IMR-90 (cell line): ENCODE measurements at regions of chr7 and their contacts with region 1.

Region 1: DNA sequence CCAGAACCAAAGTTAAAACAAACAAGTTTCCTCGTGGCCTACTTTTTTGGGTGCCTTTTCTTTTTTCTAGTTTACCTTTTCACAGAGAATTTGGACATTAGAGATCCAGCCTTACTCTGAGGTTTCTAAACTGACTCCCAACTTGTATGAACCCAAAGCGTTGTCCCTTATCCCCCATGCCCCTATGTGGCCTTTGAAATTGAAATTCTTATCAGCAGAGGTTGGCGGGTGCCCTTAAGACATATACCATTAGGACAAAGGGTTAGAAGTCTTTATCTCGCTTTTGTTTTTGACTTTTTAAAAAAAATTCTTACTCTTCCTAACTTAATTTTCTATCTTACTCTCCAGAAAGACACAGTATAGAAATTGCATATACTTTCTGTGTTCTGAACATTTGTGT is 76.3 kb upstream of the C7orf33 start:
- DNase-seq: no peak
- ATAC-seq: no peak
- H3K4me3 ChIP-seq: no peak overlapping the region
- H3K27ac ChIP-seq: no peak overlapping the region
- H3K4me1 ChIP-seq: no peaks in the 10 kb centered on the region
- H3K27me3 ChIP-seq: no peaks in the 10 kb centered on the region
- CTCF ChIP-seq: no peak
- POLR2A ChIP-seq: no peak
- RAD21 ChIP-seq: no peak

Region 2: GRCh38 chr7:148201992-148202391 is 312.2 kb before region 1 on chr7:
- CTCF ChIA-PET with region 1: no interaction called
- POLR2A ChIA-PET with region 1: no interaction called
- dilution Hi-C with region 1: no loop called
- in situ Hi-C with region 1: no loop called
- intact Hi-C with region 1: no loop called
- DNase-seq: no peak
- ATAC-seq: no peak
- H3K4me3 ChIP-seq: no peak overlapping the region
- H3K27ac ChIP-seq: no peak overlapping the region
- H3K4me1 ChIP-seq: no peaks in the 10 kb centered on the region
- H3K27me3 ChIP-seq: no peaks in the 10 kb centered on the region
- CTCF ChIP-seq: no peak
- POLR2A ChIP-seq: no peak
- RAD21 ChIP-seq: no peak

Region 3: GRCh38 chr7:148230296-148230695 is 283.9 kb before region 1 on chr7:
- CTCF ChIA-PET with region 1: no interaction called
- POLR2A ChIA-PET with region 1: no interaction called
- dilution Hi-C with region 1: no loop called
- in situ Hi-C with region 1: no loop called
- intact Hi-C with region 1: no loop called
- DNase-seq: no peak
- ATAC-seq: no peak
- H3K4me3 ChIP-seq: no peak overlapping the region
- H3K27ac ChIP-seq: no peak overlapping the region
- H3K4me1 ChIP-seq: no peaks in the 10 kb centered on the region
- H3K27me3 ChIP-seq: no peaks in the 10 kb centered on the region
- CTCF ChIP-seq: no peak
- POLR2A ChIP-seq: no peak
- RAD21 ChIP-seq: no peak

Region 4: DNA sequence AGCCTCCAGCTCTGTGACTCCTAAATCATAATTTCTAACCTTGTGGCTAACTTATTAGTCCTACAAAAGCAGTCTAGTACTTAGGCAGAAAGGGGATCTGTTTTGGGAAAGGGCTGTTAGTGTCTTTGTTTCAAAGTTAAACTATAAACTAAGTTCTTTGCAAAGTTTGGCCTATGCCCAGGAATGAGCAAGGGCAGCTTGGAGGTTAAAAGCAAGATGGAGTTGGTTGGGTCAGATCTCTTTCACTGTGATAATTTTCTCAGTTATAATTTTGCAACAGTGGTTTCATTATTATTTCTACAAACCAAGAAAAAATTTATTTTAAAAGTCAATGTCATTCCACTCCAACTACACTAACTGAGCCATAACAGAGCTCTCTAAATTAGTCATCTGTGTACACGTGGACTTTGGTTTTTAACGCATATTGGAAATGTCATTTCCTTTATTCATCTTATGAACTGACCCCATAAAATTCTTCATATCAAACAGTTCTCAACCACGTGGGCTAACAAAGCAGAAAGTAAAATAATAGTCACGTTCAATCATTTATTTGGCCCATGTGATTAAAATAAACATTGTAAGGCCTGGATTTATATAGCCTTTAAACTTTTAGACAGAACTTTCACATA is 66.9 kb before region 1 on chr7:
- CTCF ChIA-PET with region 1: no interaction called
- POLR2A ChIA-PET with region 1: no interaction called
- dilution Hi-C with region 1: no loop called
- in situ Hi-C with region 1: no loop called
- intact Hi-C with region 1: no loop called
- DNase-seq: no peak
- ATAC-seq: no peak
- H3K4me3 ChIP-seq: no peak overlapping the region
- H3K27ac ChIP-seq: no peak overlapping the region
- H3K4me1 ChIP-seq: no peaks in the 10 kb centered on the region
- H3K27me3 ChIP-seq: no peaks in the 10 kb centered on the region
- CTCF ChIP-seq: no peak
- POLR2A ChIP-seq: no peak
- RAD21 ChIP-seq: no peak

Region 5: DNA sequence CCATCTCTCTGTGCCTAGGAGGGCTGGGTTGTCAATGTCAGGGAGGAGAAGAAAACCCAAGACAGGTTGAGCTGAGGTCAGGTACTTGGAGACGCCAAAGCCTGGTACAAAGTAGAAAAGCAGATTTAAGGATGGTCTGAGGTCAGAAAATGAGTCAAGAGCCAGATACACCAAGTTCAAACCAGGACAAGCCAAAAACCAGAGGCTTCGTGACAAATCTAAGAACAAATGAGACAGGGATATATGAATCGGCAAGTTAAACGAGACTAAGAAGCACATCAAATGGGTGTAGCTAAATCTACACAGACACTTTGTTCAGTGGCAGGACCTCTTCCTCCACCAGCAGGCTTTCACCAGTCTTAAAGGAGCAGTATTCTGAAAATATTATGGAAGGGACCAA is 110.5 kb after region 1 on chr7:
- CTCF ChIA-PET with region 1: no interaction called
- POLR2A ChIA-PET with region 1: interaction called, 14 read pairs
- dilution Hi-C with region 1: no loop called
- in situ Hi-C with region 1: no loop called
- intact Hi-C with region 1: no loop called
- DNase-seq: no peak
- ATAC-seq: no peak
- H3K4me3 ChIP-seq: no peak overlapping the region
- H3K27ac ChIP-seq: no peak overlapping the region
- H3K4me1 ChIP-seq: no peaks in the 10 kb centered on the region
- H3K27me3 ChIP-seq: peaks cover 14% of the 10 kb centered on the region
- CTCF ChIP-seq: no peak
- POLR2A ChIP-seq: no peak
- RAD21 ChIP-seq: no peak